PC-3 (cell line): ENCODE measurements at regions of chr15 and their contacts with region 1.

Region 1: GRCh38 chr15:34855397-34855796 is 60.0 kb upstream of the ACTC1 start:
- DNase-seq: peak; percentile 83
- ATAC-seq: peak; percentile 75
- H3K4me3 ChIP-seq: 0 out of 2 replicates have a peak overlapping the region, but pooled peaks have one; percentile 34
- H3K27ac ChIP-seq: peak overlapping the region; percentile 98
- H3K4me1 ChIP-seq: peaks cover 28% of the 10 kb centered on the region
- H3K27me3 ChIP-seq: no peaks in the 10 kb centered on the region
- CTCF ChIP-seq: no peak

Region 2: DNA sequence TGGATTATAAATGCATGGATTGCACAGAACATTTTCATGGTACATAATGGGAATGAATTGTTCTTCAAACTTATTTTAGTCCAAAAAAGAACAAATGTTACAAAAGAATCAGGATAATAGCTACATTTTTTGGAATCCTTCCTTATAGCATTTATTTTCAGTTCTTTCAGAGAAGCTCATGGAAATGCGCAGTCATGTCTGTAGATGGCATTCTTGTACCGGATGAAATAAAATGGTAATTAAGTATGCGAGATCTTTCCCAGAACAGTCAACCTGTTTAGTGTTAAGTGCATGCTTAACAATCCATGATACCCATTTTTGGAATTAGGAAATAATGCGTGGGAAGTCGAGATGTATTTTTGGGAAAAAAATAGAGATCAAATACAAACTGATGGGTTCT is 233.7 kb before region 1 on chr15:
- CTCF ChIA-PET with region 1: interaction called, 4 read pairs
- POLR2A ChIA-PET with region 1: no interaction called
- intact Hi-C with region 1: loop called (anchors 2 kb)
- DNase-seq: peak; percentile 64
- ATAC-seq: peak; percentile 79
- H3K4me3 ChIP-seq: no peak overlapping the region
- H3K27ac ChIP-seq: no peak overlapping the region
- H3K4me1 ChIP-seq: peaks cover 12% of the 10 kb centered on the region
- H3K27me3 ChIP-seq: peaks cover 13% of the 10 kb centered on the region
- CTCF ChIP-seq: peak; percentile 85

Region 3: GRCh38 chr15:34708422-34708821 is 147.0 kb before region 1 on chr15:
- CTCF ChIA-PET with region 1: no interaction called
- POLR2A ChIA-PET with region 1: no interaction called
- intact Hi-C with region 1: loop called (anchors 1 kb)
- DNase-seq: peak; percentile 55
- ATAC-seq: peak; percentile 60
- H3K4me3 ChIP-seq: no peak overlapping the region
- H3K27ac ChIP-seq: no peak overlapping the region
- H3K4me1 ChIP-seq: peaks cover 13% of the 10 kb centered on the region
- H3K27me3 ChIP-seq: peaks cover 36% of the 10 kb centered on the region
- CTCF ChIP-seq: peak; percentile 90

Region 4: DNA sequence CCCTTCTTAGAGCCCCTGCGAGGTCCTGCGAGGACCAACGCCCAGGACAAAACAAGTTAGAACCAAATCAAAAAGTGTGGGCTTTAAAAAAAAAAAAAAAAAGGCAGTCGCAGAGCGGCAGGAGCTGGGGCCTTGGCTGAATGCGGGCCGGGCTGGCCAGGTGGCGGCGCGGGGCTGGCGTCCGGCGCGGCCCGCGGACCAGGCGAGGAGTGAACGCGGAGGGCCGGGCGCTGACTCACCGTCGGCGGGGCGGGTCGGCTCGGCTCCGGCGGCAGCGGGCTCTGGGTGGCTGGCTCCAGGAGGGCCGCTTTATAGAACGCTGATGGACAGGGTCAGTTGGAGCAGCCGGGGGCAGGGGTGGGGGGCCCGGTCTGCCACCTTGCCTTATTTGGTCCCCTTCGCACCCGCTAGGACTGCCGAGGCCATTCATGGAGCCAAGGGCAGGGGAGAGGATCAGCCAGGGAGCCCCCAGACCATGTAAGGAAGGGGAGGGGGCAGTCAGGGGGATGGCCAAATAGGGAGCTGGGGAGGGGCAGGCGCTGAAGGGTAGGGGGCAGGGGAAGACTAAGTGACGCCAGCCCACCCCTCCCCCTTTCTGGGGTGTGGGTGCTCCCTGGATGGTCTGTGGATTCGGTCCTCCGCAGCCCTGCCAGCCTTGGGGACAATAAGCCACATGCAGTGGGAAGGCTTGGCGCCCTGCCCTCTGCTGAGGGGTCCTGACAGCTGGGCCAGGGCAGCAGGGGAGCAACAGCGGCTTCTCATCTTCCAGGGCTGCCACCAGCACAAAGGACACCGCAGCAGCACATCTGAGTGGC is 59.9 kb before region 1 on chr15 and contains the start of gene ACTC1:
- CTCF ChIA-PET with region 1: no interaction called
- POLR2A ChIA-PET with region 1: no interaction called
- intact Hi-C with region 1: loop called (anchors 5 kb)
- DNase-seq: peak; percentile 53
- ATAC-seq: peak; percentile 98
- H3K4me3 ChIP-seq: peak within 1 kb of the TSS; percentile 49; the same call in 1 of the 2 replicates
- H3K27ac ChIP-seq: no peak within 1 kb of the TSS
- H3K4me1 ChIP-seq: peaks cover 4% of the 10 kb centered on the region; the same call in 1 of the 2 replicates
- H3K27me3 ChIP-seq: peaks cover 59% of the 10 kb centered on the region
- CTCF ChIP-seq: no peak; the same call in 1 of the 2 replicates
- total RNA-seq, gene ACTC1: not detected in 2 replicates

Region 5: DNA sequence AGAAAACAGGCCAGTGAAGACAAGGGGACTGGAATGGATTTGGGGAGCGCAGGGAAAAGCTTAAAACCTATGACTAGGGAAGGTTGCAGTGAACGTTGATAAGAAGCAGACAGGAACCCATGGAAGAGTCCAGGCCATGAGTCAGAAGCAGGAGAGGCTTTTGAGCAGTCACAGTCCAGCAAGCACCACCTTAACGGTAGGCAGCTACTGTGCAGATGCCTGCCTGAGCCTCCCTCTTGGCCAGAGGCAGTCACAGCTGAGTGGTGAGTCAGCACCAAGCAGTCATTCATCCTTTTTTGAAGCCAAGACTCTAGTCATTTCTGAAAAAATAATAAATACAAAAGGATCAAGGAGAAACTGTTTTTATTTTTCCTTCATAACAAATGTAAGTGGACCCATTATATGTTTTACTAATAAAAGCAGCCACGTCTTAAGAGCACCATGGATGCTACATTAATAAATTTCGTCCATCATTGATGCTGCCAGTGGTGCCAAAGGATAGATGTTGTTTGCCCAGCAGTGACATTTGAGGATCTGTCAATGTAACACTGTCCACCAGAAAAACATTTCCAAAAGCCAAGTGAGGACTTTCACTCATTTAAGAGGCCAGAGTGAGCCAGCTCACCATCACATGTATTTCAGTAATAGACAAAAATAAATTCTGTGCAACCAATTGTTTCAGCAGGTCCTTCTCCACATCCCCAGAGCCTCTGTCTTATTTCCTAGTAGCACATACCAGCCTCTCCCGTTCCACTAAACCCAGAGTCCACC is 18.0 kb before region 1 on chr15:
- CTCF ChIA-PET with region 1: no interaction called
- POLR2A ChIA-PET with region 1: no interaction called
- intact Hi-C with region 1: loop called (anchors 1 kb)
- DNase-seq: peak; percentile 85
- ATAC-seq: peak; percentile 100
- H3K4me3 ChIP-seq: no peak overlapping the region
- H3K27ac ChIP-seq: no peak overlapping the region
- H3K4me1 ChIP-seq: peaks cover 9% of the 10 kb centered on the region; the same call in 1 of the 2 replicates
- H3K27me3 ChIP-seq: no peaks in the 10 kb centered on the region
- CTCF ChIP-seq: no peak

Region 6: DNA sequence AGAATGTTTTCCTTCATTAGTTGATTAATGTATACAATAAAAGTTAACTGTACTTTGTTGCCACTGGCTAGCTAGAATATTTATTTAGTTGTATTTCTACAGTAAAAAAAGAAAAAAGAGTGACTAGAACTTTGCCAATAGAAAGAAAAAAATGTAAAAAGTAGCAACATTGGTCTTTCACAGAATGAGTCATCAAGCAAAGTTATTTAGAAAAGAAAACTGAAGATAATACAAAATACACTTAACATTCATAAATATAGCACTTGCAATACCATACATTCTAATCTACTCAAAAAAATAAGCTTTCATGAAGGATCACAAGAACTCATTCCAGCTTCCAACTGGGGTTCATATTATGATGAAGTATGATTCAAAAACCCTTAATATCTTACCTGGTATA is 30.7 kb after region 1 on chr15:
- CTCF ChIA-PET with region 1: no interaction called
- POLR2A ChIA-PET with region 1: no interaction called
- intact Hi-C with region 1: loop called (anchors 2 kb)
- DNase-seq: no peak
- ATAC-seq: no peak
- H3K4me3 ChIP-seq: no peak overlapping the region
- H3K27ac ChIP-seq: no peak overlapping the region
- H3K4me1 ChIP-seq: peaks cover 5% of the 10 kb centered on the region; the same call in 1 of the 2 replicates
- H3K27me3 ChIP-seq: no peaks in the 10 kb centered on the region
- CTCF ChIP-seq: no peak